ENCODE measurements at regions of chr3 and their contacts with region 1.

Region 1: GRCh38 chr3:5194341-5195159 is 7.0 kb downstream of the EDEM1 start:
- DNase-seq: peak; percentile 40
- CTCF ChIP-seq: no peak

Region 2: DNA sequence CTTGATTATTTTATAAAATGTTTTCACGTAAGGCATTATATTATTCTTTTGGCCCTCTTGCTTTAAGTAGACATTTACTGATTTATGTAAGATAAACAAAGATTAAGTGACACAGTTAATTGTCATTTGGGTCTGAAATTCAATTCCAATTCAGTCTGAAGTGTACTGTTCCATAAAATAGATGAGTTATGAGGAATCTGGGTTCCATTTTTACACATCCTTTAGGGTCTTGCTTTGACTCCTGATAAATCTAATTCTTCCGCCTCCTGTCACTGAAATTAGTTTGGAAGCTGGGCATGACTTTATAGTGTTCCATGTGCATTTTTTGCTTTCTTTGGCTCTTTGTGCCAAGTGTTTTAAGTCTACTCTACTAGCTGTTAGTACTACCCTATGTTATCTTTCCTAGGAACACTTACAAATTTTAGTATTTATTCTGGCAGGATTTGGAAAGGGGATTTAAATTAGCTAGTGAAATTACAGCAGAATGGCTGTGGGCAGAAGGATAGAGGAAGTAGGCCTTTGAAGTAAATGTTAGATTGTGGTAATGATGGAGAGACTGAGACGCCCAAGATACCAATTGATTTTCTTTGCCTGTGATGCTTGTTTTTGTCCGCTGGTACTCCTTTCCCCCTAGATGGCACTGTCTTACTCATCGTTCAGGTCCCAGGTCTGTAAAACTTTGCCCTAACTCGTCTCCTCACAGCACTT is 58.2 kb before region 1 on chr3:
- in situ Hi-C with region 1: loop called (anchors 5 kb)
- DNase-seq: peak; percentile 56
- CTCF ChIP-seq: peak; percentile 61

Measured in GM13976 (cell line).